B cell (primary cell): ENCODE measurements at regions of chr3 and their contacts with region 1.

Region 1: GRCh38 chr3:132399054-132399929 is 18.0 kb upstream of the DNAJC13 start:
- DNase-seq: peak; percentile 52
- ATAC-seq: no peak
- H3K4me3 ChIP-seq: no peak overlapping the region
- H3K4me3 Mint-ChIP-seq: no peak overlapping the region
- H3K27ac ChIP-seq: no peak overlapping the region
- H3K27ac Mint-ChIP-seq: no peak overlapping the region
- H3K4me1 ChIP-seq: no peaks in the 10 kb centered on the region
- H3K4me1 Mint-ChIP-seq: peaks cover 2% of the 10 kb centered on the region
- H3K27me3 ChIP-seq: no peaks in the 10 kb centered on the region
- H3K27me3 Mint-ChIP-seq: no peaks in the 10 kb centered on the region
- CTCF ChIP-seq: peak; percentile 83

Region 2: DNA sequence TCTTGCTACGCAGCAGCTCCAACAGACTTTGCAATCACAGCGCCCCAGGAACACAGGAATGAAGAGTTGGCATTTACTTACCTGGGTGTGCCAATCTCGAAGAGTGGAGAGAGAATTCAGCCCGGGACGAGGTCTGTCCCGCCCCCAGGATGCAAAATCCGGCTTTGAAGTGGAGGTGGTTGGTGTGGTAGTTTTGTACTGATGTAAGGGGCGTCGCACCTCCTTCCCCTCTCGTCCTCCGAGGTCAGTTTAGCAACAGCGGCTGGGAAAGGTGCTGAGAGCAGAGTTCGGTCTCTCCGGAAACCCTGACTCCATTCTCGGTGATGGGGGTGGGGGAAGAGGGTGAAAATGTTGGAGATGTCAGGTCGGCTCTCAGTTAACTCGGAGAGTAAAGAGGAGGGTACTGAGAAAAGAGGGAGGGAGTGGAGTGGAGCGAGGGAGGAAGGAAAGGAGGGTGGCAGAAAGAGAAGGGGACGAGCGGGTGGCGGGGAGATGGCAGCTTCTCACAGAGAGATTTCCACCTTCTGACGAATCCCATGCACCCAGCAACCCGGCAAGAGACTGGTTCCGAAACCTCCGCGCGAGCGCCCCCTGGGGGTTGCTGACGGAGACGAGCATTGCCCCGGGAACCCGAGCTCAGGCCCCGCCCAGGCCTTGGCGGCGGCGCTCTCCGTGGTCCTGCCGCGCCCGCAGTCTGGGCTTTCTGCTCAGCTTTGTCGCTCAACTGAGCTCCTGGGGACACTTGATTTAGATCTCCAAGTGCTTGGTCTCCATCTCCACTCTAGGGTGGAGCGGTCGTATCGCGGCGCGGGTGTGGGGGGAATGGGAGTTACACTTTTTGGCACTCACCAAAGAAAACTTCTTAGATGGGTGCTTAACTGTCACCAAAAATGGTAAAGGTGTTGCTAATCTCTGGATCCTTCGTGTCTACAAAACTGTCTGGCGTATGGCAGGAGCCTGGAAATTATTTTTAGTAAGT is 364.5 kb before region 1 on chr3 and contains the start of gene CPNE4:
- CTCF ChIA-PET with region 1: interaction called, 3 read pairs
- POLR2A ChIA-PET with region 1: no interaction called
- intact Hi-C with region 1: loop called (anchors 5 kb)
- DNase-seq: peak; percentile 17
- ATAC-seq: peak; percentile 49
- H3K4me3 ChIP-seq: no peak within 1 kb of the TSS
- H3K4me3 Mint-ChIP-seq: no peak within 1 kb of the TSS
- H3K27ac ChIP-seq: no peak within 1 kb of the TSS
- H3K27ac Mint-ChIP-seq: no peak within 1 kb of the TSS
- H3K4me1 ChIP-seq: no peaks in the 10 kb centered on the region
- H3K4me1 Mint-ChIP-seq: peaks cover 8% of the 10 kb centered on the region
- H3K27me3 ChIP-seq: peaks cover 0 to 28% (median 20%) of the 10 kb centered on the region in 4 experiments
- H3K27me3 Mint-ChIP-seq: peaks cover 74% of the 10 kb centered on the region
- CTCF ChIP-seq: peak; percentile 29
- total RNA-seq, gene CPNE4: not detected in 2 replicates

Region 3: GRCh38 chr3:132253262-132253878 is 145.9 kb before region 1 on chr3:
- CTCF ChIA-PET with region 1: no interaction called
- POLR2A ChIA-PET with region 1: no interaction called
- intact Hi-C with region 1: loop called (anchors 2 kb)
- DNase-seq: peak; percentile 36
- ATAC-seq: no peak
- H3K4me3 ChIP-seq: no peak overlapping the region
- H3K4me3 Mint-ChIP-seq: no peak overlapping the region
- H3K27ac ChIP-seq: no peak overlapping the region
- H3K27ac Mint-ChIP-seq: no peak overlapping the region
- H3K4me1 ChIP-seq: no peaks in the 10 kb centered on the region
- H3K4me1 Mint-ChIP-seq: no peaks in the 10 kb centered on the region
- H3K27me3 ChIP-seq: no peaks in the 10 kb centered on the region
- H3K27me3 Mint-ChIP-seq: peaks cover 18% of the 10 kb centered on the region
- CTCF ChIP-seq: peak; percentile 66

Region 4: DNA sequence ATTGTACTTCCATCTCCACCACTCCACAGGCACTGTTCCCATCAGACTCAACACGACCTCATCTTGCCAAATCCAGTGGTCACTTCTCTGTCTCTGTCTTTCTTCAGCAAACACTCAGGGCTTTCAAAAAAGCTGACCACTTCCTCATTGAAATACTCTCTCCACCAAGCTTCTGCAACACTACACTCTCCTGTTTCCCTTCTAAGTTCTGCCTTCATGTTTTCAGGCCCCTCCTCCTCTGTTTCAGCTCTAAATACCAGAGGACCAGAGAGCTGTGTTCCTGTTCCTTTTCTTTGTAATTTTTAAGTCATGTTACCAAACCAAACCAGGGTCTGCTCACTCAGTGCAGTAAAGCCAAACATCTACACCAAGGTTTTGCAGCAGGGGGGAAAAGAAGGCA is 115.9 kb before region 1 on chr3:
- CTCF ChIA-PET with region 1: no interaction called
- POLR2A ChIA-PET with region 1: no interaction called
- intact Hi-C with region 1: no loop called
- DNase-seq: no peak
- ATAC-seq: no peak
- H3K4me3 ChIP-seq: no peak overlapping the region
- H3K4me3 Mint-ChIP-seq: no peak overlapping the region
- H3K27ac ChIP-seq: no peak overlapping the region
- H3K27ac Mint-ChIP-seq: no peak overlapping the region
- H3K4me1 ChIP-seq: no peaks in the 10 kb centered on the region
- H3K4me1 Mint-ChIP-seq: no peaks in the 10 kb centered on the region
- H3K27me3 ChIP-seq: no peaks in the 10 kb centered on the region
- H3K27me3 Mint-ChIP-seq: peaks cover 20% of the 10 kb centered on the region
- CTCF ChIP-seq: no peak

Region 5: DNA sequence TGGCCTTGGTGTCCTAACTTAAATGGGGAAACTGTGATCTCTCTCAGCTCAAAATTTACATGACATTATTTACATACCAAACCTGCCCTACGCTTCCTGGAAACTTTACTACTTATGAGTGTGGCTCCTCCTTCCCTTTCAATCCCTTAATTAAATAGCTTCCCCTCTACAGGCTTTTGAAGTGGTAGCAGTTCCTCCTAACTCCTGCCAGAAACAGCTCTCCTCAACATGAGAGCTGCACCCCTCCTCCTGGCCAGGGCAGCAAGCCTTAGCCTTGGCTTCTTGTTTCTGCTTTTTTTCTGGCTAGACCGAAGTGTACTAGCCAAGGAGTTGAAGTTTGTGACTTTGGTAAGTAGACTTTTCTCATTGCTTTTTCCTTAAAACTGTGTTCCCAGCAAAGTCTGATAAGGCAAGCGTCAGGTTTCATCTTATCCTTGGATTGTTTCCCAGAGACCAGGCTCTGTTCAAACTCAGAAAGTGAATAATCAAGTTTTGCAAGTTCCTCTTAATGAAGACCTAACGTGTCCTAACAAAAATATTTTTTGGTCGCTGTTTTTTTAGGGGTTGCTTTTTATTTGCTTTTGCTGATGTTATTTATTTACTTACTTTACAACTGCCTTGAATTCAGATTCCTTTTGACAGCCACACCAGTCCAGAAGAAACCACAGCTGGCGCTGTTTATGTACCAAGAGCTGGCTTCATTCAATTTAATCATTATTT is 81.9 kb before region 1 on chr3 and contains the start of gene ACP3:
- CTCF ChIA-PET with region 1: no interaction called
- POLR2A ChIA-PET with region 1: no interaction called
- intact Hi-C with region 1: no loop called
- DNase-seq: peak; percentile 28
- ATAC-seq: peak; percentile 51
- H3K4me3 ChIP-seq: peak within 1 kb of the TSS in 1 of 5 experiments; percentile 1
- H3K4me3 Mint-ChIP-seq: peak within 1 kb of the TSS; percentile 53
- H3K27ac ChIP-seq: no peak within 1 kb of the TSS
- H3K27ac Mint-ChIP-seq: no peak within 1 kb of the TSS
- H3K4me1 ChIP-seq: peaks cover 0 to 7% of the 10 kb centered on the region in 2 donors
- H3K4me1 Mint-ChIP-seq: peaks cover 7% of the 10 kb centered on the region
- H3K27me3 ChIP-seq: no peaks in the 10 kb centered on the region
- H3K27me3 Mint-ChIP-seq: peaks cover 4% of the 10 kb centered on the region
- CTCF ChIP-seq: no peak
- total RNA-seq, gene ACP3: 0.39 and 0.64 TPM in 2 replicates

Region 6: GRCh38 chr3:132822266-132822665 is 423.0 kb after region 1 on chr3:
- CTCF ChIA-PET with region 1: no interaction called
- POLR2A ChIA-PET with region 1: no interaction called
- intact Hi-C with region 1: no loop called
- DNase-seq: no peak
- ATAC-seq: no peak
- H3K4me3 ChIP-seq: no peak overlapping the region
- H3K4me3 Mint-ChIP-seq: no peak overlapping the region
- H3K27ac ChIP-seq: no peak overlapping the region
- H3K27ac Mint-ChIP-seq: no peak overlapping the region
- H3K4me1 ChIP-seq: no peaks in the 10 kb centered on the region
- H3K4me1 Mint-ChIP-seq: no peaks in the 10 kb centered on the region
- H3K27me3 ChIP-seq: no peaks in the 10 kb centered on the region
- H3K27me3 Mint-ChIP-seq: peaks cover 16% of the 10 kb centered on the region
- CTCF ChIP-seq: no peak